ENCODE measurements at regions of chr2 and their contacts with region 1.

Region 1: GRCh38 chr2:45935791-45936622 is 284.5 kb downstream of the PRKCE start:
- DNase-seq: peak; percentile 80
- CTCF ChIP-seq: peak; percentile 67

Region 2: GRCh38 chr2:45432406-45432805 is 503.6 kb before region 1 on chr2:
- in situ Hi-C with region 1: no loop called
- DNase-seq: no peak
- CTCF ChIP-seq: no peak

Region 3: GRCh38 chr2:45637440-45637839 is 298.6 kb before region 1 on chr2:
- in situ Hi-C with region 1: loop called (anchors 5 kb)
- DNase-seq: no peak
- CTCF ChIP-seq: no peak

Region 4: GRCh38 chr2:45741161-45741850 is 194.7 kb before region 1 on chr2:
- in situ Hi-C with region 1: no loop called
- DNase-seq: no peak
- CTCF ChIP-seq: no peak

Region 5: DNA sequence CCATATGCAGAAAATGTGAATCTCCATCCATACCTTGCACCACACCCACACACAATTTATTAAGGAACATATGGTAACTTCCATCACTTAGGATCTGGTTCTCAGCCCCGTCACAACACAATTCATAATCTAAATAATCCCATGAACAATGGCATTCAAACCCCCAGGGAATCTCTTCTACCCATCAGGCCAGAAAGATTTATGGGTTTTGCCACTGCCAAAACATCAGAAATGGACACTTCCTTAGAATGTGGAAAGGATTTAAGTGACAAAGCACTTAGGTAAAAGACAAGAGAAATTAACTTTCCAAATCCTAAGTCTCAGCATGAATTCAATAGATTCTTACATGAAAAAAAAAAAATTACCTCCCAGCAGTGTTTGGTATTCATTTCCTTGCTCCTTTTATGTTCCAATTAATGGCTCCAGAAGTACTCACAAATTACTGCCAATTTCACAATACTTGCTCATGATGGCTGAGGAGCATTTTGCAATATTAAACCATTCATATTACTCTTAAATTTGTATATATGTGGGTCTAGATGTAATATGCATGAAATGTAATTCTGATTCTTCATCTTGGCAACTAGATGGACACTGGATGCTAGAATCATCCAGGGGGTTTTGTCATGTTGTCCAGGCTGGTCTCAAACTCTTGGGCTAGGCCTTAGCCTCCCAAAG is 486.8 kb after region 1 on chr2:
- in situ Hi-C with region 1: no loop called
- DNase-seq: no peak
- CTCF ChIP-seq: no peak